AG04449 (cell line): ENCODE measurements at regions of chr2 and their contacts with region 1.

Region 1: DNA sequence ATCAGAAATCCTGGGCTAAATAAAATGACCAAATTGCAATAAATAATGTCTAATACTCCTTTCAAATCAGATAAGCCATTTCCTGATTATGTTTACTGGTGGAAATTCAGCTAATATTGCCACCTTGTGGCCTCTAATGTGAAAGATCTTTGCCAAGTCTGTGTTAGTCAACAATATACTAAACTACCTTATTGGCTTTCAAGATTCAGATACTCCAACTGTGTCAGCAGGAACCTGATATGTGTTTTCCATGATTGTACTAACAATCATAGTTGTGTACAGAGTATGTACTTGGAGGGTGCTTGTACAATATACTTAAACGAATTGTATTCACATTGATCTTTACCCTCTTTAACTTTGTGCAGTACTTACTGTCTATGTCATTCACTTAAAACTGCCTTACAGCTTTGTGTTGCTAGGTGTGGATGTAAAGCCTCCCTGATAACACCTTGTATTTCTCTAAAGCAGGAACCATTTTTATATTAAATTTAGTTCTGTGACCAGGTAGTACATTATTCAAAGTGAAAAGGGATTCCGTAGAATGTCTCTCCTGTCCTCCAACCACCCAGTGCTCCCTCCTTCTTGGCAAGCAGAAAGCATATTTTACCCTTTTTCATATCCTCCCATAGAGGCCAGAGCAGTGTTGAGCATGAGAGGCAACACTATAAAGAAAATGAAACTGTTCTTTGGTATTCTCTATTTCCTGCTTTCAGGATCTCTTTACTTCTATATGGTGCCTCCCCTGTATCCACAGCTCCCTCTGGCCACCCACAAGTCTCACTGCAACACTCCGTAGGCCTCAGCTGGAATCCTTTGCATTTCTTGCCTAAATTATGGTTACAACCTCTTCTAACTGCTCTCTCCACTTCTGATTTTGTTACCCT is 75.2 kb upstream of the C2orf15 start:
- DNase-seq: peak; percentile 21
- H3K4me3 ChIP-seq: no peak overlapping the region
- CTCF ChIP-seq: peak; percentile 64

Region 2: GRCh38 chr2:98649135-98649991 is 417.0 kb before region 1 on chr2:
- CTCF ChIA-PET with region 1: interaction called, 73 read pairs
- POLR2A ChIA-PET with region 1: no interaction called
- DNase-seq: peak; percentile 21
- H3K4me3 ChIP-seq: no peak overlapping the region
- CTCF ChIP-seq: peak; percentile 93

Region 3: DNA sequence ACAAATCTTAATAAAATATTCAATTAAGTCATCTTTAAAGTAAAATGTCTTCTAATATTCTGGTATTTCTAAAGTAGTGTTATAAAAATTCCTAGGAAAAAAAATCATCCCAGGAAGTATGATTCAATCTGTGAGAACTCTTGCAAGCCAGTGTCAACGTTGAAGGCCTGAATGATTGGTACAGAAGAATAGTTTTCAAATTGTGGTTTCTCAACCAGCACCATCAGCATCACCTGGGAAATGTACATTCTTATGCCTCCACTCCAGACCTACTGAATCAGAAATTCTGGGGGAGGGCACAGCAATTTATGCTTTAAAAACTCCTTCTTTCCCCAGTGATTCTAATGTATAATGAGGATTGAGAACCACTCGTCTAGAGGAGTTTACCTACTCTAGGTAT is 12.9 kb after region 1 on chr2:
- CTCF ChIA-PET with region 1: interaction called, 29 read pairs
- POLR2A ChIA-PET with region 1: no interaction called
- DNase-seq: no peak
- H3K4me3 ChIP-seq: no peak overlapping the region
- CTCF ChIP-seq: no peak